Mammary epithelial cell (primary cell): ENCODE measurements at regions of chr4 and their contacts with region 1.

Region 1: GRCh38 chr4:169024762-169025161 is 14.7 kb upstream of the CBR4 start:
- DNase-seq: peak; percentile 34
- H3K4me3 ChIP-seq: no peak overlapping the region
- H3K27ac ChIP-seq: no peak overlapping the region
- H3K4me1 ChIP-seq: no peaks in the 10 kb centered on the region
- H3K27me3 ChIP-seq: no peaks in the 10 kb centered on the region
- CTCF ChIP-seq: peak; percentile 69 to 77

Region 2: DNA sequence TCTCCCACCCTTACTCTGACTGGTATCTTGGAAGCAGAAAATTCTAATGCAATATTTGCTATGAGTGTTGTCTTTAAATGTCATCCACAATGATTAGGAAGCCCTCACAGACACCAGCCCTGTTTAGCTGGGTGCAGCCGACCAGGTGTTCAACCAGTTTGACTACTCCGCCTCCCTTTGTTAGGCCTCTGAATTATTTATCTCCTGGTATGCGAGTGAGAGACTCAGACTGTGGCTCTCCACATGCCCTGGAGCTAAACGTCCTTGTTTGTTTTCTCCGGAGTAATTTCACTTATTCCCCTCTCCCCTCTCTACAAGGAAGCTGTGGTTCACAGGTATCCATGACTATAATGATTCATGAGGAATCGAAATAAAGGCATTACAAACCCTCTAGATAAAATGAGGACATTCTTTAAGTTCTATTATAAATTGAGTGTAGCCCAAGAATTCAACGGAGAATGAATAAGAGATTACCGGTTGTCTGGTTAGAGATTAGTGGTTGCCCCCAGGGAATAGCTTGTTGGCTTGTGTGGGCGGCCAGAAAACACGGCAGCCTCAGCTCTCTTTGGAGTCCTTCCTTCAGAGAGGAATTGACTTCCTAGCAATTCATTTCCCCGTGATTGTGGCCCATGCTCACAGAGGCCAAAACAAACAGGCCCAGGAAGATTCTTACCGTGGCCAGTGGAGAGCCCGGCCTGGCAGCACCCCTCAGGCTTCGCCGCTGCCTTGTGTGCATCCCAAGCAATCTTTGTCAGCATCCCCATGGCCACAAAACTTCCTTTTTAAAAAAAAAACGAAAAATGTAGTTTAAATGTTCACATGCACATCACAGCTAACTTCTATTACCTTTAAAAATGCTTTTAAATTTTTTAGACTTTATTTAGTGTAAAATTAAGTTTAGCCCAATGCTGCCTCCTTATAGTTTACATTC is 45.5 kb after region 1 on chr4:
- CTCF ChIA-PET with region 1: interaction called, 7 read pairs
- dilution Hi-C with region 1: no loop called
- in situ Hi-C with region 1: no loop called
- intact Hi-C with region 1: loop called (anchors 2 kb)
- DNase-seq: peak; percentile 99
- H3K4me3 ChIP-seq: peak overlapping the region; percentile 11 to 18 (median 12)
- H3K27ac ChIP-seq: peak overlapping the region; percentile 94
- H3K4me1 ChIP-seq: peaks cover 41% of the 10 kb centered on the region
- H3K27me3 ChIP-seq: no peaks in the 10 kb centered on the region
- CTCF ChIP-seq: no peak

Region 3: DNA sequence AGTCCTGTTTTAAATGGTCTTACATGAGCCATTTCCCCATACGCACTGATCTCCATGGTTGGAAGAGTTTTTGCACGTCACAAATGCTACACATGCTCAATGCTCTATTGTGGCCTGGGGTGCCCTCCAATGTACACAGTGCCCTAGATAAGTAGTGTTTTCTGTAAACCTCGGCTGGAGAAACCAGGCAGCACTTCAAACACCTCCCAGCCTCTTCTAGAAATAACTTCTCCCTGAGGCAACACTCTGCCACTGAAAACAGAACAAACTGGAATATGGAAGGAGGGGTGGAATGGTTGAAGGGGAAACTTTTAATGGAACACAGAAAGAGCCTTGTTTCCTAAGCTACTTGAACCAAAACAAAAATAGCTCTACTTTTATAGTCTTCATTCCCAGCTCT is 109.2 kb after region 1 on chr4:
- CTCF ChIA-PET with region 1: interaction called, 13 read pairs
- dilution Hi-C with region 1: no loop called
- in situ Hi-C with region 1: no loop called
- intact Hi-C with region 1: no loop called
- DNase-seq: no peak
- H3K4me3 ChIP-seq: no peak overlapping the region
- H3K27ac ChIP-seq: no peak overlapping the region
- H3K4me1 ChIP-seq: no peaks in the 10 kb centered on the region
- H3K27me3 ChIP-seq: no peaks in the 10 kb centered on the region
- CTCF ChIP-seq: no peak

Region 4: DNA sequence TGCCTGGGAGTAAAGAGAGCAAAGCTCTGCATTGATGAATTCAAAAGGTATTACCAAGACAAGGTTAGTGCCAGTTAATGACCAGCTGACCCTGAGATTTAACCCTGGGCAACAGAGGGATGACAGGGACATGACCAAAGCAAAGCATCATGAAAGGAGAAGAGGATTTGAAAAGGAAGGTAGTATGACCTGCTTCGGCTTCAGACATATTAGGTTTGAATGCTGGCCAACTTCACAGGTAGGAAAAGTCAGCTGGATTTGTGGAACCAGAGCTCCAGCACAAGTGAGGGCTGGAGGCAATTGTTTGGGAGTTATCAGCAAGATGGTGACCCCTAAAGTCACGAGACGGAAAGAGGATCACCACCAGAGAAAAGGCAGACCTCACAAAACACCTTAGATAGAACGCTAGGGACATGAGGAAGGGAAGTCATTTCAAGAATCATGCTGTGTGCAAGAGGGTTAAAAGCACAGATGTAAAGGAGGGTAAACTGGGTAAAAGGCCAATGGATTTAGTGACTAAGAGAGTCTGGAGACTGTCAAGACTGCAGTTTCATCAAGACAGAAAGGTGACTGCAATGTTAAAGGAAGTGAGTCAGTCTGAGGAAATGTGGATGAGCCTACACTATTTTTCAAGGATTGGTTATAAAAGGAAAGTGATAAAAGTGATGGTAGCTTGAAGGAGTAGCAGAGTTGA is 200.4 kb after region 1 on chr4:
- CTCF ChIA-PET with region 1: no interaction called
- dilution Hi-C with region 1: no loop called
- in situ Hi-C with region 1: no loop called
- intact Hi-C with region 1: loop called (anchors 5 kb)
- DNase-seq: peak; percentile 91
- H3K4me3 ChIP-seq: no peak overlapping the region
- H3K27ac ChIP-seq: peak overlapping the region; percentile 88
- H3K4me1 ChIP-seq: peaks cover 56% of the 10 kb centered on the region
- H3K27me3 ChIP-seq: no peaks in the 10 kb centered on the region
- CTCF ChIP-seq: no peak

Region 5: DNA sequence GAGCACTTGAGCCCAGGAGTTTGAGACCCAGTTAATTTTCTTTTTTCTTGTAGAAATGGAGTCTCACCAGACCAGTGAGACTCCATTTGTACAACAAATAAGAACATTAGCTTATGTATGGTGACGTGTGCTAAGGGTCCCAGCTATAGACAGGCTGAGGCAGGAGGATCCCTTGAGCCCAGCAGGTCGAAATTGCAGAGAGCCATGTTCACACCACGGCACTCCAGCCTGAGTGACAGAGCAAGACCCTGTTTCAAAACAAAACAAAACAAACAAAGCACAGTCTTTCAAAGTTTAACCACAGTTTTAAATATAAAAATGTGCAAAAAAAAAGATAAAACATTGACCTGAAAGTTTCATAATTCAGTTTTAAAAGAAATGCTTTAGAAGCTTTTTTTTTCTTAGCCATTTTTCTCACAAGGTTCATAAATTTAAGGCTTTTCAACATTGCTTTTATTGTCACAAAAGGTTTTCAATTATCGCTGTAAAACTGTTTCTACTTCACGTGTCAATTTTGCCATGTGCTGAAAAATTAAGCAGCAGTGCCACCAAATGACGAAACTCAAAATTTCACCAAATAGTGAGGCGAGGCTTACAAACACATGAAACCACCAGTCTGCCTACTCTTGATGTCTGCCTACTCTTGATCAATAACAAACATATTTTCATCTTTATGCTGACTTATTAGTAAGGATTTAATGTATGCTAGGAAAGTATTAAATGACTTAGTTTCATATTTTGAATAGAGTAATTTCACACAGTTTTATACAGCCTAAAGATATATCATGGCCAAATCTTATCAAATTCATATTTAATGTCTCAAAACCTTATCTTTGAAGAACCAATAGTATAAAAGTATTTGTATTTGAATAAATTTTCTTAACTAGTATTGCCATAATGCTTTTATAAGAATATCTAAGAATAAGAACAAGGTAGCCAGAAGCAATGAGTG is 461.3 kb after region 1 on chr4:
- CTCF ChIA-PET with region 1: no interaction called
- dilution Hi-C with region 1: no loop called
- in situ Hi-C with region 1: loop called in 1 of 2 experiments (anchors 5 kb)
- intact Hi-C with region 1: loop called (anchors 1 kb)
- DNase-seq: peak; percentile 50
- H3K4me3 ChIP-seq: no peak overlapping the region
- H3K27ac ChIP-seq: peak overlapping the region; percentile 15
- H3K4me1 ChIP-seq: peaks cover 4% of the 10 kb centered on the region
- H3K27me3 ChIP-seq: no peaks in the 10 kb centered on the region
- CTCF ChIP-seq: peak; percentile 43 to 54

Region 6: GRCh38 chr4:169566021-169566818 is 541.5 kb after region 1 on chr4:
- CTCF ChIA-PET with region 1: no interaction called
- dilution Hi-C with region 1: no loop called
- in situ Hi-C with region 1: no loop called
- intact Hi-C with region 1: loop called (anchors 10 kb)
- DNase-seq: peak; percentile 40
- H3K4me3 ChIP-seq: no peak overlapping the region
- H3K27ac ChIP-seq: no peak overlapping the region
- H3K4me1 ChIP-seq: peaks cover 2% of the 10 kb centered on the region
- H3K27me3 ChIP-seq: no peaks in the 10 kb centered on the region
- CTCF ChIP-seq: peak; percentile 66 to 70